ENCODE measurements at regions of chr17 and their contacts with region 1.

Region 1: DNA sequence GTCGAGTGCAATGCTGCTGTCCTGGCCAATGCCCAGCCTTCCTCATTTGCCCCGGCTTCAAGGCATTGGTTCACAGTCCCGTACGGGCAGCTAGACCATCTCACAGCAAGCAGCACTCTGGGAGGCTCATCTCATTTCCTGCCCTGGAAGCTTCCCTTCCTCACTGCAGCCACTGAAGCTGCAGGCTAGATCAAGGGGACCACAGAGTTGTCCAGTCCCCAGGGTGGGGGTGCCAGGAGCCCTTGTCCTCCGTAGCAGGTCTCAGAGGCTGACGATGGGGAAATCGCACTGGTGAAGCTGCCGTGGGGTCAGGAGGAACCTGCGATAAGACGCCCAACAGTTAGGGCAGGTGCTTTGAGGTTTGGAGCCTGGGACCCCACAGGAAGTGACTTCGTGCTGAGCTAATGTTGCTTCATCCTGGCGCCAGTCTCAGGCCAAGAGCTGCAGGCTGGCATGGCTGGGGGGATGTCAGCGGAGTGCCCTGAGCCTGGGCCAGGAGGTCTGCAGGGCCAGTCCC is at the start of gene SPNS3:
- H3K4me3 Mint-ChIP-seq: peak within 1 kb of the TSS; percentile 27
- H3K27ac Mint-ChIP-seq: peak within 1 kb of the TSS; percentile 49
- H3K4me1 Mint-ChIP-seq: peaks cover 46% of the 10 kb centered on the region
- H3K27me3 Mint-ChIP-seq: peaks cover 19% of the 10 kb centered on the region

Region 2: DNA sequence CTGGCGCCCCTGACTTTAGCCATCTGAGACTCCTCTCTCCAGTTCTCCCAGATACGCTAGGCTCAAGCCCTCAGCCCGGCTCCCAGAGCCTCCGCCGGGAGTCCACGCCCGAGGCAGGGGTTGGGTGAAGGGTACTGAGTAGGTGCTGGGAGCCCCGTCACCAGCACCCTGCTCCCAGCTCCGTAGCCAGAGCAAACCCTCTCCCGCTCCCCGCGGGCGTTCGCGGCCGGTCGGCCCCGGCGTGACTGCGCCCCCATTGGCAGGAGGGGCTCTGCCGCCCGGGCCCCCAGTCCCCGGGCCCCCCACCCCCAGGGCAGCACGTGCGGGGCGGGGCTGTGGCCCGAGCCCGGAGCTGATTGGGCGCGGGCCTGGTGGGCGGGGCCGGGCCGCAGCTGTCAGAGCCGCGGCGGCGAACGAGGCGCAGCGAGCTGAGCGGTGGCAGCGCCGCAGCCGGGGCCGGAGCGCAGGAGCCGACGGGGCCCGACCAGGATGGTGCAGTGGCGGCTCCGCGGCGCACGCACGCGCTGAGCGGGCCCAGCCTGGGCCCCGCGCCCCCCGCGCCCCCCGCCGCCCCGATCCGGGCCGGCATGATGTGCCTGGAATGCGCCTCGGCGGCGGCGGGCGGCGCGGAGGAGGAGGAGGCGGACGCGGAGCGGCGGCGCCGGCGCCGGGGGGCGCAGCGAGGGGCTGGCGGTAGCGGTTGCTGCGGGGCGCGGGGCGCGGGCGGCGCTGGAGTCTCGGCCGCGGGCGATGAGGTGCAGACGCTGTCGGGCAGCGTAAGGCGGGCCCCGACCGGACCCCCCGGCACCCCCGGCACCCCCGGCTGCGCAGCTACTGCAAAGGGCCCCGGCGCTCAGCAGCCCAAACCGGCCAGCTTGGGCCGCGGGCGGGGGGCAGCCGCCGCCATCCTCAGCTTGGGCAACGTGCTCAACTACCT is 65.2 kb after region 1 on chr17 and contains the start of gene SPNS2:
- intact Hi-C with region 1: loop called (anchors 10 kb)
- H3K4me3 Mint-ChIP-seq: peak within 1 kb of the TSS; percentile 74
- H3K27ac Mint-ChIP-seq: peak within 1 kb of the TSS; percentile 25
- H3K4me1 Mint-ChIP-seq: peaks cover 16% of the 10 kb centered on the region
- H3K27me3 Mint-ChIP-seq: peaks cover 62% of the 10 kb centered on the region

Region 3: DNA sequence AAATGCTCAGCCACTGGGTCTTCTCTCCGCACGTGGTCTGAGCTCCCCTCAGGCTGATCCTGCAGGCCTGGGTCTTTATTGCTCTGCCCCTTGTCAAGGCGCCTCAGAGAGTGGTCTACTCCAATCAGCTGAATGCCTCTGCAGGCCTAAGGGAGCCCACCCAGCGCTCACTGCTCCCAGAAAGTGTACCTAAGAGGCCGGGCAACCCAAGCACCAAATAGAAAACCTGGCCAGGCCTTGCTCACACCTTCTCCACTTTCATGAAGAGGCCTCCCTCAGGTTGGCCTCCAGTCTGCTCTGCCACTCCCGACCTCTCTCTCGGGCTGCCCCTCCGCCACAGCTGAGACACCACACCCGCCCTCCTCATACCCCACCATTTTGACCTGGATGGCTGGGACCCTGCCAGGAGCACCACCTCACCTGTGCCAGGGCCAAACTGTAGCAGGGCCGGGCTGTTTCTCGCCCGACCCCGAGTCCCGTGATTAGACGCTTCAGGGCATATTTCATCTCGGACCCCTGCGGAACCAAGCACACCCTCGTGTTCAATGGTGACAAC is 120.9 kb after region 1 on chr17:
- intact Hi-C with region 1: no loop called
- H3K4me3 Mint-ChIP-seq: peak overlapping the region; percentile 88
- H3K27ac Mint-ChIP-seq: peak overlapping the region; percentile 98
- H3K4me1 Mint-ChIP-seq: peaks cover 31% of the 10 kb centered on the region
- H3K27me3 Mint-ChIP-seq: no peaks in the 10 kb centered on the region